SK-N-SH (cell line): ENCODE measurements at regions of chr5 and their contacts with region 1.

Region 1: DNA sequence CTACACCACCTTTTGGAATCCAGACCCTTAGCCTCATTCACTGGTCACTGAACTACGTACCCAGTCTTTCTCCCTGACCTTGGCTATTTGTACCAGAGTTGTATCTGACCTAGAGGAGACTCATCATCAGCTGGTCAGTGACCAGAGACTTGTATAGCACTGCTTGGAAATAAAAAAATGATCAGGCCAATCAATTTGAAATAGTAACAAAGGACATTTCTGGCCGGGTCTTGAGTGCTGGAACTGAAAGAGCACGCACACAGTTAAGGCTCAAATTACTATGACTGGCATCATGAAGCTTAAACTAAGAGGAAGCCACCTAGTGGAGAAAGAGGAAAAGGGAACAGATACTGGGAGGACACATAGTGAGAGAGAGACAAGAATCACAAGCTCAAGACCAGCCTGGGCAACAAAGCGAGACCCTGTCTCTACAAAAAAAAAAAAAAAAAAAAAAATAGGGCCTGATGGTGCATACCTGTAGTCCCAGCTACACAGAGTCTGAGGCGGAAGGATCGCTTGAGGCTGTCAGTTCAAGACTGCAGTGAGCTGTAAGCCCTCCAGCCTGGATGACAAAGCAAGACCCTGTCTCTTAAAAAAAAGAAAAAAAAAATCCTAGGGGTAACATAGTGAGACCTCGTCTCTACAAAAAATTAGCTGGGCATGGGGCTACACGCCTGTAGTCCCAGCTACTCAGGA is 12.8 kb upstream of the SRP19 start:
- DNase-seq: peak; percentile 32
- H3K4me3 ChIP-seq: 0 out of 4 replicates have a peak overlapping the region, but pooled peaks of 1 of the 2 experiments have one; percentile 7
- H3K27ac ChIP-seq: no peak overlapping the region
- H3K4me1 ChIP-seq: peaks cover 0 to 2% of the 10 kb centered on the region in 2 experiments; a peak in 2 of 4 replicates
- H3K27me3 ChIP-seq: no peaks in the 10 kb centered on the region
- CTCF ChIP-seq: peak; percentile 72
- EP300 ChIP-seq: no peak
- RAD21 ChIP-seq: peak; percentile 50

Region 2: DNA sequence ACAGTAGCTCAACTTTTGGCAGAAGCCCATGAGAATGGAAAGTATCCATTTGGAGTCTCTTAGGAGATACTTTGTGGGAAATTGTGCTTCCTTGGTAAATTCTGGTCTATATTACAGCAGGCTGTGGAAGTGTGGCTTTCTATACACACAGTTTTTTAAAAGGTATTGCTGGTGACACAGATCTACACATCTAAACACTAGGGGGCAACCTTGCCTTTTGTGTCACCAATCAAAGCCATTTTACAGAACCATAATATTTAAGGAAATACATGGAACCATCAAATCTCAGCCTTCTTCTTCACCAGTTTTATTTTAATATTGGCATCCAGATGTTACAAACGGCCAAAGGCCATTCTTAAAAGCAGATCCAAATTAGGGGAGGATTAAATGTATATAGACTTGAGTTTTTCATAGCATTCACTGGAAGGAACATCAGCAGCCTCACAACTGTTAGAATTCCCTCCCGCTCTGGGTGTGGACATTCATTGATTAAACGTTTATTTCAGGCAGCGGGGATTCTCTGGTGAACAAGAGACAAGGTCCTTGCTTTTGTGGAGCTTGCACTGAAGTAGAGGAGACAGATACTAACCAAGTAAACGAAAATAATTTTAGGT is 296.7 kb before region 1 on chr5:
- CTCF ChIA-PET with region 1: interaction called, 15 read pairs
- POLR2A ChIA-PET with region 1: no interaction called
- DNase-seq: peak; percentile 42
- H3K4me3 ChIP-seq: no peak overlapping the region; a peak in 1 of 4 replicates
- H3K27ac ChIP-seq: no peak overlapping the region
- H3K4me1 ChIP-seq: peaks cover 0 to 3% of the 10 kb centered on the region in 2 experiments; a peak in 1 of 4 replicates
- H3K27me3 ChIP-seq: no peaks in the 10 kb centered on the region
- CTCF ChIP-seq: peak; percentile 82
- EP300 ChIP-seq: no peak
- RAD21 ChIP-seq: peak; percentile 95

Region 3: GRCh38 chr5:112691758-112692157 is 156.5 kb before region 1 on chr5:
- CTCF ChIA-PET with region 1: interaction called, 12 read pairs
- POLR2A ChIA-PET with region 1: no interaction called
- DNase-seq: peak; percentile 16
- H3K4me3 ChIP-seq: no peak overlapping the region
- H3K27ac ChIP-seq: no peak overlapping the region
- H3K4me1 ChIP-seq: no peaks in the 10 kb centered on the region; a peak in 1 of 4 replicates
- H3K27me3 ChIP-seq: no peaks in the 10 kb centered on the region
- CTCF ChIP-seq: peak; percentile 55
- EP300 ChIP-seq: no peak
- RAD21 ChIP-seq: peak; percentile 80

Region 4: GRCh38 chr5:112833971-112834370 is 14.3 kb before region 1 on chr5:
- CTCF ChIA-PET with region 1: interaction called, 25 read pairs
- POLR2A ChIA-PET with region 1: no interaction called
- DNase-seq: no peak
- H3K4me3 ChIP-seq: no peak overlapping the region
- H3K27ac ChIP-seq: no peak overlapping the region
- H3K4me1 ChIP-seq: no peaks in the 10 kb centered on the region
- H3K27me3 ChIP-seq: no peaks in the 10 kb centered on the region
- CTCF ChIP-seq: no peak
- EP300 ChIP-seq: no peak
- RAD21 ChIP-seq: no peak

Region 5: GRCh38 chr5:112860929-112861637 is 12.8 kb after region 1 on chr5 and contains the start of gene SRP19:
- CTCF ChIA-PET with region 1: interaction called, 22 read pairs
- POLR2A ChIA-PET with region 1: interaction called, 4 read pairs
- DNase-seq: peak; percentile 91
- H3K4me3 ChIP-seq: peak within 1 kb of the TSS; percentile 91 to 96
- H3K27ac ChIP-seq: peak within 1 kb of the TSS; percentile 86 to 88
- H3K4me1 ChIP-seq: peaks cover 18 to 22% of the 10 kb centered on the region in 2 experiments; a peak in 3 of 4 replicates
- H3K27me3 ChIP-seq: no peaks in the 10 kb centered on the region
- CTCF ChIP-seq: no peak
- EP300 ChIP-seq: no peak
- RAD21 ChIP-seq: no peak
- polyA plus RNA-seq, gene SRP19: 46.4 and 54.1 TPM in 2 replicates

Region 6: GRCh38 chr5:112895682-112896081 is 47.4 kb after region 1 on chr5:
- CTCF ChIA-PET with region 1: no interaction called
- POLR2A ChIA-PET with region 1: no interaction called
- DNase-seq: no peak
- H3K4me3 ChIP-seq: no peak overlapping the region
- H3K27ac ChIP-seq: no peak overlapping the region
- H3K4me1 ChIP-seq: no peaks in the 10 kb centered on the region
- H3K27me3 ChIP-seq: no peaks in the 10 kb centered on the region
- CTCF ChIP-seq: no peak
- EP300 ChIP-seq: no peak
- RAD21 ChIP-seq: no peak